ENCODE measurements at regions of chr10 and their contacts with region 1.

Region 1: GRCh38 chr10:97921581-97922021 is 72.0 kb downstream of the GOLGA7B start:
- DNase-seq: peak in 3 of 5 donors; percentile 32 to 73 (median 43)
- ATAC-seq: peak; percentile 70 to 84 (median 72)
- H3K4me3 ChIP-seq: no peak overlapping the region
- H3K27ac ChIP-seq: peak overlapping the region in 8 of 12 donors; percentile 16 to 82 (median 56)
- H3K4me1 ChIP-seq: peaks cover 0 to 28% (median 7%) of the 10 kb centered on the region in 12 donors
- H3K27me3 ChIP-seq: peaks cover 0 to 17% (median 4%) of the 10 kb centered on the region in 9 donors
- CTCF ChIP-seq: no peak
- POLR2A ChIP-seq: no peak

Region 2: DNA sequence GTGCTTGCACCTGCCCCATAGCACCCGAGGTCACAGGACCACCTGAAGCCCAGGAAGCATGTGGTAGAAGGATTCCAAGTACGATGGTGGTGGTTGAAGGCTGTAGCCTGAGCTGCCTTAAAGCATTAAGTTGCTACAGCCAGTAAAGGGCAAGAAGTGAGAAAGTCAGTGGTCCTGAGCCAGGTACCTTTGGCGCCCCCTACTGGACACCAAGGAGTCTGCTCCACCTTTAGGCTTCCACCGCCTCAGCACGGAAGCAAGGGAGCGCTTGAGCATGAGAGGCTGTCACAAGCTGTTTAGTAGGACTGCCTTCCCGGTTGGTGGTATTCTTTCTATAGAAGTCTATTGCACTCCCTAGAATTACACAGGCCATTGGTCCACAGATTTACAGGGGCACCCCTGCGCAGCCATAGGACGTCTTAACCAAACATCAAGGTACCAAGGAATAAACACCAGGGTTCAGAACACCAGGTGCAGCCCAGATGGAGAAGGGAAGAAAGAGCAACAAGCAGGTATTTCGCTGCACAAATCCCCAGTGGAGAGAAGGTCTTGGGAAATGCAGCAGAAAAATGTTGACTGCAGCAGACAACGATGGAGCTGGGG is 106.7 kb after region 1 on chr10:
- intact Hi-C with region 1: loop called in 4 of 10 experiments (anchors 5 kb)
- DNase-seq: peak in 4 of 5 donors; percentile 44 to 49 (median 46)
- ATAC-seq: peak; percentile 38 to 64 (median 57)
- H3K4me3 ChIP-seq: no peak overlapping the region
- H3K27ac ChIP-seq: no peak overlapping the region
- H3K4me1 ChIP-seq: peaks cover 0 to 25% (median 12%) of the 10 kb centered on the region in 12 donors
- H3K27me3 ChIP-seq: peaks cover 11 to 69% (median 31%) of the 10 kb centered on the region in 9 donors
- CTCF ChIP-seq: peak; percentile 60 to 87 (median 75)
- POLR2A ChIP-seq: no peak

Region 3: GRCh38 chr10:98778277-98778759 is 856.7 kb after region 1 on chr10:
- intact Hi-C with region 1: no loop called
- DNase-seq: no peak
- ATAC-seq: no peak
- H3K4me3 ChIP-seq: no peak overlapping the region
- H3K27ac ChIP-seq: no peak overlapping the region
- H3K4me1 ChIP-seq: no peaks in the 10 kb centered on the region
- H3K27me3 ChIP-seq: no peaks in the 10 kb centered on the region
- CTCF ChIP-seq: no peak
- POLR2A ChIP-seq: no peak

Measured in heart left ventricle (tissue), 16 donors.